IMR-90 (cell line): ENCODE measurements at regions of chr3 and their contacts with region 1.

Region 1: DNA sequence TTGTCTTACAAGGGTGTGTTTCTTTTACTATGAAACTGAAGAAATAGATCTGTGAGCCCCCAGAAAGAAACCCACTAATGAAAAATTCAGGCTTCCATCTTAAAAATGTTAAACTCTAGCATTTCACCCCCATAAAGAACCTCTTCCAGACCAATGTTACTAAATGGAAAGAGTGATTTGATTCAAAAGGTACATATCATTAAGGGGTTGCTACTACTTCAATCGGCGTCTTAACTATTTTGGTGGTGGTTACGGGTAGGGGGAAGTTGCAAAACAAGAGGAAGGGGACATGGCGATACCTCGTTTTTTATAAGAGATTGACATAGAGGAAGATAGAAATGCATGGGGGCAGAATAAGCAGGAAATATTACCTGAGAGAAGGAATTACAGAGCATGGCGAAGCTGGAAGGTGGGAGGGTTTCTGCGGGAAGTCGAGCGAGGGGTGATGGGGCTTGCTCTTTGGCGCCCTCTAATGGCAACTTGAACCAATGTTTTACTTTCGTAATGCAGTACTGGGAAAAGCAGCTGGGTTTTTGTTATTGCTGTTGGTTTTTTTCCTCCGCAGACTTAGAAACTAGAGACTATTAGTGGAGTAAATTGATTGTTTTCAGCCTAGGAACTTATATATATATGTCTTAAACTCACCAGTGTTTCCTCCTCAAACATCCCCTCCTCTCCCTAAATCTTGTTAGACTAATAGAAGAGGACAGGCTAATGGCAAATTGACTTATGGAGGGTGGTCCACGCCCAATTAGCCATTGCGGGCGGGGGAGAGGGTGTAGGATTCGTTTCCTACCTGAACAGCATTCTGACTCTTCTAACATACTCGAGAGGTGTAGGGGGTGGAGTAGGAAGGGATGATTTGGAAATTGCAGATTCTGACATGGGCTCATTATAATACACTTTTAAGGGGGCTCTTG is 11.3 kb upstream of the SOX2 start:
- DNase-seq: peak; percentile 54
- ATAC-seq: peak; percentile 69; the same call in 1 of the 2 replicates
- H3K4me3 ChIP-seq: no peak overlapping the region
- H3K27ac ChIP-seq: no peak overlapping the region
- H3K4me1 ChIP-seq: no peaks in the 10 kb centered on the region
- H3K27me3 ChIP-seq: peaks cover 40% of the 10 kb centered on the region
- CTCF ChIP-seq: peak; percentile 73
- POLR2A ChIP-seq: no peak
- RAD21 ChIP-seq: peak; percentile 50

Region 2: DNA sequence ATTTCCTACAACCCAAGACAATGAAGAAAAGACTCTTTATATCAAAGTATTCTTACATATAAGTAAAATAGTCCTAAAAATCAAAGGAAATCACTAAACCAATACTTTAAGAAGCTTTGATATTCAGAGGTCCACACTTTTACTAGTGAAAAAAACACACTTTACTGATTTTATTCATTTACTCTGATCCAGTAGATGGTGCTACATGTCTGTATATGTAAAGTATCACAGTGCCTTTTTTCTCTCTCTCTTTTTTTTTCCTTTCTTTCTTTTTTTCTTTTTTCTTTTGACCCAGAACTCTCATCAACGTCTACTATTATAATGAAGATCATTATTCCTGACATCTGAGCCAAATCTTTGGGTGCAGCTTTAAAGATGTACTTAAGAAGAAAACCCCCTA is 1010.4 kb before region 1 on chr3:
- CTCF ChIA-PET with region 1: no interaction called
- POLR2A ChIA-PET with region 1: no interaction called
- dilution Hi-C with region 1: no loop called
- in situ Hi-C with region 1: no loop called
- intact Hi-C with region 1: loop called (anchors 5 kb)
- DNase-seq: no peak
- ATAC-seq: no peak
- H3K4me3 ChIP-seq: no peak overlapping the region
- H3K27ac ChIP-seq: no peak overlapping the region
- H3K4me1 ChIP-seq: no peaks in the 10 kb centered on the region
- H3K27me3 ChIP-seq: no peaks in the 10 kb centered on the region
- CTCF ChIP-seq: no peak
- POLR2A ChIP-seq: no peak
- RAD21 ChIP-seq: no peak

Region 3: DNA sequence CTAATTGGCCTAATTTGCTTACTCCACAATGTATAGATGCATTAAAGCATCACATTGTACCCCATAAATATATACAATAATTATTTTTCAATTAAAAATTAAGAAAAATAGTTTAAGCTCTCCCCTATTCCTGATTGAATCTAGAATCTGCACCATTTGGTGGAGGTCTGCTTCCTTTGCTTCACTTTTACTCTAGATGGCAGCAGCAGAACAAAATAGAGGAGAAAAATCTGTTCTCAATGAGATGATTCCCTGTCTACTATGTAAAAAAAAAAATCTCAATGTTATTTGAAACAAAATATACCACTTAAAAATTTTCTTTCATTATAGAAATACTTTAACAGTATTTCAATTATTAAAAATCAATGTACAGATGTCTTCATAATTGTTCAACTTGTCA is 897.6 kb before region 1 on chr3:
- CTCF ChIA-PET with region 1: no interaction called
- POLR2A ChIA-PET with region 1: no interaction called
- dilution Hi-C with region 1: no loop called
- in situ Hi-C with region 1: no loop called
- intact Hi-C with region 1: loop called (anchors 1 kb)
- DNase-seq: peak; percentile 4
- ATAC-seq: no peak
- H3K4me3 ChIP-seq: no peak overlapping the region
- H3K27ac ChIP-seq: no peak overlapping the region
- H3K4me1 ChIP-seq: no peaks in the 10 kb centered on the region
- H3K27me3 ChIP-seq: no peaks in the 10 kb centered on the region
- CTCF ChIP-seq: peak; percentile 49
- POLR2A ChIP-seq: no peak
- RAD21 ChIP-seq: peak; percentile 45

Region 4: GRCh38 chr3:181210275-181210674 is 490.2 kb before region 1 on chr3:
- CTCF ChIA-PET with region 1: interaction called, 3 read pairs
- POLR2A ChIA-PET with region 1: no interaction called
- dilution Hi-C with region 1: no loop called
- in situ Hi-C with region 1: loop called (anchors 25 kb)
- intact Hi-C with region 1: loop called (anchors 1 kb)
- DNase-seq: peak; percentile 15
- ATAC-seq: no peak
- H3K4me3 ChIP-seq: no peak overlapping the region
- H3K27ac ChIP-seq: no peak overlapping the region
- H3K4me1 ChIP-seq: no peaks in the 10 kb centered on the region
- H3K27me3 ChIP-seq: no peaks in the 10 kb centered on the region
- CTCF ChIP-seq: 0 out of 2 replicates have a peak, but pooled peaks have one; percentile 30
- POLR2A ChIP-seq: no peak
- RAD21 ChIP-seq: peak; percentile 18; the same call in 1 of the 2 replicates